Naive thymus-derived CD4-positive, alpha-beta T cell (primary cell): ENCODE measurements at regions of chr20 and their contacts with region 1.

Region 1: DNA sequence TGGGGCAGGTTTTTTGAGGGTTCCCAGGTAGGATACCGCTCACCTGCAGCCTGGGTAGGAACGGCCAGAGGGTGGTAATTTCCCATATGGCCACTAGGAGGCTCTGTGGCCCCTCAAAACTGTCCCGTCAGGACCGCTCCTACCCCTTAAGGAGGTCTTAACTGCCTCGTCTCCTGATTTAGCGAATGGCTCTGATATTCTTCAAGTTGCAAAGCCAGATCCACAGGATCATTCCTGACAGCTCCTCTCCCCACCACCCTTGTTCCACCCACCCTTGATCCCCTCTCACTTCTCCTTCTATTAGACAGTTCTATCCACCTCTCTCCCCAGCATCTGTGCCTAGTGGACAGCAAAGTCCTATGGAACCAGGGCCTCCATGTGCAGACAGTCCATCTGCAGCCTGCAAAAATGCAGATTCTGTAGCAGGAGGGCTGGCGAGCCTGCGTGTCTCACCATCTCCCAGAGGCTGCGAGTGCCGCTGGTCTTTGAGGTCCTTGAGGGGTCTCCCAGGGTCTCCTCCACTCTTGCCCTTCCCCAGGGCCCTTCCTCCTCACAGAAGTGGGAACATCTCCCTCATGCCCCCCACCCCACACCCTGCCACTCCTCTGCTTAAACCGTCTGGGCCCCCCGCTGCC is 34.3 kb upstream of the ZBP1 start:
- DNase-seq: peak in 8 of 9 donors; percentile 26 to 68 (median 59)
- ATAC-seq: peak; percentile 80
- H3K4me3 ChIP-seq: no peak overlapping the region
- H3K4me3 Mint-ChIP-seq: peak overlapping the region in 3 of 10 donors; percentile 2 to 46 (median 19)
- H3K27ac ChIP-seq: no peak overlapping the region
- H3K27ac Mint-ChIP-seq: peak overlapping the region in 5 of 9 donors; percentile 19 to 92 (median 56)
- H3K4me1 ChIP-seq: peaks cover 13 to 17% of the 10 kb centered on the region in 2 donors
- H3K4me1 Mint-ChIP-seq: peaks cover 14 to 42% (median 34%) of the 10 kb centered on the region in 7 donors
- H3K27me3 ChIP-seq: no peaks in the 10 kb centered on the region
- H3K27me3 Mint-ChIP-seq: peaks cover 0 to 11% (median 0%) of the 10 kb centered on the region in 5 donors

Region 2: GRCh38 chr20:57628047-57628961 is 26.2 kb before region 1 on chr20:
- CTCF ChIA-PET with region 1: interaction called, 23 read pairs
- POLR2A ChIA-PET with region 1: interaction called, 14 read pairs
- intact Hi-C with region 1: loop called in 1 of 2 experiments (anchors 1 kb)
- DNase-seq: peak in 7 of 9 donors; percentile 62 to 81 (median 71)
- ATAC-seq: peak; percentile 88
- H3K4me3 ChIP-seq: peak overlapping the region; percentile 49
- H3K4me3 Mint-ChIP-seq: peak overlapping the region; percentile 85 to 97 (median 91)
- H3K27ac ChIP-seq: peak overlapping the region; percentile 83
- H3K27ac Mint-ChIP-seq: peak overlapping the region; percentile 92 to 100 (median 98)
- H3K4me1 ChIP-seq: peaks cover 41 to 51% of the 10 kb centered on the region in 2 donors
- H3K4me1 Mint-ChIP-seq: peaks cover 38 to 94% (median 80%) of the 10 kb centered on the region in 7 donors
- H3K27me3 ChIP-seq: no peaks in the 10 kb centered on the region
- H3K27me3 Mint-ChIP-seq: peaks cover 0 to 53% (median 0%) of the 10 kb centered on the region in 5 donors

Region 3: DNA sequence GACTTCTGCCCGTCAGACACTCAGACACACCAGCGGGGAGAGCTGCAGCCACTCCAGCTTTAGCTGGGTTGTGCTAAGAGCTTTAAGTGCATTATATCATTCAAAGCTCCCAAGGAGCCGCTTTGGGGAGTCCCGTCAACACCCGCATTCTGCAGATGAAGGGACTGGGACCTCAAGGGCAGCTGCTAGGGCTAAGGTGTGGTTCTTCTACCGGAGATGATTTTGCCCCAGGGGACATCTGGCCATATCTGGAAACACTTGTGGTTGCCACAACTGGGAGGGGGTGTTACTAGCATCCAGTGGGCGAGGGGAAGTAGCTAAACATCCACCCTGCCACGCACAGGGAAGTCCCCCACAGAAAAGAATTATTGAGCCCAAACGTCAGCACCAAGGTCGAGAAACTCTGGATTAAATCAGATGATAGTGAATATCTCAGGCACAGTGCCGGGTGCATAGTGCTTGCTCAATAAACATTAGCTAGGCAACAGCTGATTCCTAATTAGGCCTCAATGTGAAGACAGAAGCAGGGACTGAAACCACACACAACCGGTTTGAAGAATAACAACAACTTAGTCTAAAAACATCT is 25.7 kb after region 1 on chr20:
- CTCF ChIA-PET with region 1: interaction called, 11 read pairs
- POLR2A ChIA-PET with region 1: interaction called, 5 read pairs
- intact Hi-C with region 1: loop called in 1 of 2 experiments (anchors 1 kb)
- DNase-seq: no peak
- ATAC-seq: peak; percentile 46
- H3K4me3 ChIP-seq: no peak overlapping the region
- H3K4me3 Mint-ChIP-seq: peak overlapping the region in 3 of 10 donors; percentile 26 to 48 (median 43)
- H3K27ac ChIP-seq: no peak overlapping the region
- H3K27ac Mint-ChIP-seq: peak overlapping the region in 1 of 9 donors; percentile 14
- H3K4me1 ChIP-seq: peaks cover 0 to 15% of the 10 kb centered on the region in 2 donors
- H3K4me1 Mint-ChIP-seq: peaks cover 0 to 49% (median 32%) of the 10 kb centered on the region in 7 donors
- H3K27me3 ChIP-seq: no peaks in the 10 kb centered on the region
- H3K27me3 Mint-ChIP-seq: peaks cover 0 to 11% (median 0%) of the 10 kb centered on the region in 5 donors

Region 4: DNA sequence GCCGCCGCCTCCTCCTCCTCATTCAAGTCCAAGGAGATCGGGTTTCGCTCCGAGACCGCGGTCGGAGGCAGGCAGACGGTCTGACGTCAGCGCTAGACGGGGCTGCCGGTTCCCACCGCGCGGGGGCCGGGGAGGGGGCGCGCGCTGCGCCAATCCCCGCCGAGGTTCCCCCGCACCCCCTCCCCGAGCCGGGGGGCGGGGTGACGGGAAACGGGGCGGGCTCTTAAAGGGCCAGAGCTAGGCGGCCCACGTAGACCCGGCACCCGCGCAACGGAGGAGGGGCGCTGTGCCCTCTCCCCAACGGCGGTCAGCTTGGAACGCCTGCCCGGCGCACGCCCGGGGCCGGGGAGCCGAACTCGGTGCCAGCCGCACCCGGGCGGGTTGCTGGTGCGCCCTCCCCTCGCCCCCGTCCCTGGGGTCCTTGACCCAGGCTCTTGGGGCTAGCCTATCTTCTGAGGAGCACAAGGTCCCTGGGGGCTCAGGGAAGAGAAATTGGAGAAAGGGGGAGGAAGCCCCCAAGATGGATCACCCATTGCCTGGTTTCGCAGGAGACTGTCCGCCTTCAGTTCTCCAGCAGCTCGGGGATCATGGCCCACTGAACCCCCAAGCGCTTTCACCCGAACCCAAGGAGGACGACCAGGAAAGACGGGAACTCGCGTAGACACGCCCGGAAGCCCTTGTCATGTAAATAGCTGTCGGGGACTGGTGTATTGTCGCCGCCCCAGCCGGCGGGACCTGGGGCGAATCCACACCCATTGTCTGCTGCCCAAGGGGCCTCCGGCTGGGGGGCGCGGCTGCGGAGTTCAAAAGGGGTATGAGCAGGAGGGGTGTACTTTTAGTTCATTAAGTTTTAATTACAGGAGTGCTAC is 55.7 kb after region 1 on chr20 and contains the start of gene PMEPA1:
- CTCF ChIA-PET with region 1: interaction called, 3 read pairs
- POLR2A ChIA-PET with region 1: interaction called, 3 read pairs
- intact Hi-C with region 1: loop called in 1 of 2 experiments (anchors 1 kb)
- DNase-seq: peak; percentile 91 to 95 (median 93)
- ATAC-seq: peak; percentile 96
- H3K4me3 ChIP-seq: peak within 1 kb of the TSS; percentile 98
- H3K4me3 Mint-ChIP-seq: peak within 1 kb of the TSS; percentile 82 to 97 (median 94)
- H3K27ac ChIP-seq: peak within 1 kb of the TSS; percentile 88
- H3K27ac Mint-ChIP-seq: peak within 1 kb of the TSS; percentile 46 to 97 (median 95)
- H3K4me1 ChIP-seq: peaks cover 11 to 23% of the 10 kb centered on the region in 2 donors
- H3K4me1 Mint-ChIP-seq: peaks cover 15 to 55% (median 44%) of the 10 kb centered on the region in 7 donors
- H3K27me3 ChIP-seq: peaks cover 0 to 7% of the 10 kb centered on the region in 2 donors
- H3K27me3 Mint-ChIP-seq: peaks cover 0 to 51% (median 0%) of the 10 kb centered on the region in 5 donors
- total RNA-seq, gene PMEPA1: 0.44 to 10.0 (median 9.0) TPM

Region 5: GRCh38 chr20:57879779-57880570 is 225.5 kb after region 1 on chr20:
- CTCF ChIA-PET with region 1: no interaction called
- POLR2A ChIA-PET with region 1: no interaction called
- intact Hi-C with region 1: no loop called
- DNase-seq: no peak
- ATAC-seq: no peak
- H3K4me3 ChIP-seq: no peak overlapping the region
- H3K4me3 Mint-ChIP-seq: no peak overlapping the region
- H3K27ac ChIP-seq: no peak overlapping the region
- H3K27ac Mint-ChIP-seq: no peak overlapping the region
- H3K4me1 ChIP-seq: no peaks in the 10 kb centered on the region
- H3K4me1 Mint-ChIP-seq: peaks cover 0 to 1% (median 0%) of the 10 kb centered on the region in 7 donors
- H3K27me3 ChIP-seq: no peaks in the 10 kb centered on the region
- H3K27me3 Mint-ChIP-seq: peaks cover 0 to 6% (median 0%) of the 10 kb centered on the region in 5 donors

Region 6: GRCh38 chr20:58179432-58180099 is 525.1 kb after region 1 on chr20:
- CTCF ChIA-PET with region 1: interaction called, 4 read pairs
- POLR2A ChIA-PET with region 1: no interaction called
- intact Hi-C with region 1: loop called (anchors 1 kb)
- DNase-seq: peak; percentile 37 to 86 (median 71)
- ATAC-seq: peak; percentile 92
- H3K4me3 ChIP-seq: peak overlapping the region; percentile 54
- H3K4me3 Mint-ChIP-seq: peak overlapping the region; percentile 48 to 82 (median 71)
- H3K27ac ChIP-seq: no peak overlapping the region
- H3K27ac Mint-ChIP-seq: no peak overlapping the region
- H3K4me1 ChIP-seq: peaks cover 3 to 8% of the 10 kb centered on the region in 2 donors
- H3K4me1 Mint-ChIP-seq: peaks cover 0 to 17% (median 7%) of the 10 kb centered on the region in 7 donors
- H3K27me3 ChIP-seq: no peaks in the 10 kb centered on the region
- H3K27me3 Mint-ChIP-seq: peaks cover 9 to 28% (median 20%) of the 10 kb centered on the region in 5 donors